Adrenal gland (tissue), 19 donors: ENCODE measurements at regions of chr5 and their contacts with region 1.

Region 1: DNA sequence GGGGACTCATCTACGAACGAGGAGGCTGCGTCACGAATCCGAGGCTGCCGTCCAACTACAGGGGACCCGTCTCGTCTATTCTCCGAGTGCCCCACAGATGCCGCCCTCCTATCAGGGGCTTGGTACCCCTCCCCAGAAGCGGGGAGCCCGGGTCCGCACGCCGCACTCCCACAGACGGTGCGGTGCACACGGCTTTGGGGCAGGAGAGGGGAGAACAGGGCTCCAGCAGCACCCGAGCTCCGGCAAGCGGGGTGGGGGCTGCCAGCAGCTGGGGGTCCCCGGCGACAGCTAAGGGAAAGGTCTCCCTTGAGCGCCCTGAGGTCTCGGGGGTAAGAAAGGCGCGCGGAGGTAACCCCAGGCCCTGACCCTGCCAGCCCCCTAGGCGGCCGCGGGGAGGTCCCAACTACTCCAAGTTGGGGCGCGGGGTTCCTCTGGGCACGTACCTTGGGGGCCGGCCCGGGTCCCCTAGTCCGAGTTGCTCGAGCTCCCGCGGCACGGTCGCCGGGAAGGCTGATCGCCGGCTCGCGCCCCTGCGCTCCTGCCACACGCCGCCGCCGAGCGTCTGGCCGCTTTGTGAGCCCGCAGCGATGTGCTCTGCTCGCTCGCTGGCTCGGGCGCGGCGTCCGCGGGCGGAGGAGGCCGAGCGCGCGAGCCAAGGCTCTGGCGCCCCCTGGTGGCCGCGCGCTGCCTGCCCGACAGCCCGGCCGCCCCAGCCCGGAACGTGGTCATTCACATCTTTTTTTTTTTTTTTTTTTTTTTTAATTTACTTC is at the start of gene SPOCK1:
- DNase-seq: peak; percentile 56 to 86 (median 74)
- H3K4me3 ChIP-seq: peak within 1 kb of the TSS in 2 of 4 donors; percentile 43 to 65
- H3K27ac ChIP-seq: peak within 1 kb of the TSS in 1 of 5 donors; percentile 43
- H3K4me1 ChIP-seq: peaks cover 5 to 6% of the 10 kb centered on the region in 2 donors
- H3K27me3 ChIP-seq: peaks cover 4% of the 10 kb centered on the region
- CTCF ChIP-seq: peak; percentile 10 to 97 (median 56)
- POLR2A ChIP-seq: peak in 1 of 2 donors; percentile 61
- total RNA-seq, gene SPOCK1: 5.4 to 102 (median 62.1) TPM

Region 2: DNA sequence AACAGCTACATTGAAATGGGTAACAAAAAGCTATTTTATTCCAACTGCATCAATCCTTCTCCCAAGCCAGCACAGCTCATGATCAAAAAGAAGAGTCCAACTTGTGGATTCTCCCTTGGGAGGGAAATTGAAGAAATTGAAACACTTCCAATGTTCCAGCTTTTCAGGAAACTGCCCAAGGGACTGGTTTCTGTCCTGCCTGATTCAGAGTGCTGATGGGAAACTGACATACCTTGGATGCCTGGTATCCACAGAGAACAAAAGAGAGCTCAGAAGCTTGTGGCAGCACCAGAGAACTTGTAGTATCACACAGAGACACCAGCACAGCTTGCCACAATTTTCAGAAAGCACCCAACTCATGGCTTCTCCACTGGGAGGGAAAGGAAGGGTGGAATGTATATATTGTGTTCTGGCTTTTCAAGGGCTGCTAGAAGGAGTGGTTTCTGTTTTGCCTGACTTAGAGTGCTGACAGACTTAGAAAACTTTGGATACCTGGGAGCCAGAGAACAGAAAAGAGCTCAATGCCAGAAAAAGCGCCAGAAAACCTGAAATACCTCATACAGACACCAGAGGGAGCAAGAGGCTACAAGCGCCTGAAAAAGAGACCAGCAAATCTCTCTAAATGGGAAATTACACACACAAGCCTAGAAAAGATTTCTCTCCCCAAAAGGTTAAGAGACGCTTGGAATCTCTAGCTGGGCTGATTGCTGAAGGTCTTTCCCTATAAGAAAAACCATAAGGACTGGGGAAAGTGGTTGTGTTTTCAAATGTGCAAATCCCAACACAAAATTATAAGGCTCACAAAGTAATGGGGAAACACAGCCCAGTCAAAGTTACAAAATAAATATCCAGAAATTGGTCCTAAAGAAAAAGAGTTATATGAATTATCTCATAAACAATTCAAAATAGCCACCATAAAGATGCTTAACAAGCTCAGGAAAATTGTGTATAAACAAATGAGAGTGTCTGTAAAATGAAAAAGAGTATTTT is 178.6 kb before region 1 on chr5:
- intact Hi-C with region 1: loop called in 1 of 2 experiments (anchors 5 kb)
- DNase-seq: peak in 6 of 7 donors; percentile 31 to 81 (median 50)
- H3K4me3 ChIP-seq: no peak overlapping the region
- H3K27ac ChIP-seq: no peak overlapping the region
- H3K4me1 ChIP-seq: peaks cover 5 to 13% of the 10 kb centered on the region in 2 donors
- H3K27me3 ChIP-seq: no peaks in the 10 kb centered on the region
- CTCF ChIP-seq: peak; percentile 75 to 85 (median 80)
- POLR2A ChIP-seq: no peak

Region 3: DNA sequence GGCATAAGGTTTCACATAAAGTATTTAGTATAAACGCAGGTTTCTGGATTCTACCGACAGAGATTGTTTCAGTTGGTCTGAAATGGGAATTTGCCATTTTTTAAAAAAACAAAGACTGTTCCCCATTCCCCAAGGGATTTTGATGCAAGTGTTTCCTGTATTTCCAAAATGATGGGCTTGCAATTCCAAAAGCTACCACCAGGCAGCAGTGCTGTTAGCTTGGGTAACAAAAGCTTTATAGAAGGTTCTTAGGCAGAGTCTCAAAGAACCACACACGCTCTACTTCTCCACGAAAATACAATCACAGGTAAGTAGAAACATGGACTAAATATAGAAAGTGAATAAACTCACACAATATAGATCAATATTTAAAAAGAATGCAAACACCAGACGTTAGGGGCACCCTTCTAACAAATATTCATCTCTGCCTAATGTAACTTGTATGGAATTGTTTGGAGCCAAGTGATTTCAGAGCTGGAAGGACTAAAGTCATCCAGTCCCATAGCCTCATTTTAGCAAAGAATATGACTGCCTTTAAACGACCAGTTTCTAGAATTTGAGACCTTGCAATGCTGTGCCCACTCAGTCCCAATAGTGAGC is 154.1 kb before region 1 on chr5:
- intact Hi-C with region 1: loop called (anchors 5 kb)
- DNase-seq: peak; percentile 33 to 86 (median 59)
- H3K4me3 ChIP-seq: no peak overlapping the region
- H3K27ac ChIP-seq: no peak overlapping the region
- H3K4me1 ChIP-seq: no peaks in the 10 kb centered on the region
- H3K27me3 ChIP-seq: no peaks in the 10 kb centered on the region
- CTCF ChIP-seq: peak; percentile 74 to 84 (median 79)
- POLR2A ChIP-seq: no peak

Region 4: DNA sequence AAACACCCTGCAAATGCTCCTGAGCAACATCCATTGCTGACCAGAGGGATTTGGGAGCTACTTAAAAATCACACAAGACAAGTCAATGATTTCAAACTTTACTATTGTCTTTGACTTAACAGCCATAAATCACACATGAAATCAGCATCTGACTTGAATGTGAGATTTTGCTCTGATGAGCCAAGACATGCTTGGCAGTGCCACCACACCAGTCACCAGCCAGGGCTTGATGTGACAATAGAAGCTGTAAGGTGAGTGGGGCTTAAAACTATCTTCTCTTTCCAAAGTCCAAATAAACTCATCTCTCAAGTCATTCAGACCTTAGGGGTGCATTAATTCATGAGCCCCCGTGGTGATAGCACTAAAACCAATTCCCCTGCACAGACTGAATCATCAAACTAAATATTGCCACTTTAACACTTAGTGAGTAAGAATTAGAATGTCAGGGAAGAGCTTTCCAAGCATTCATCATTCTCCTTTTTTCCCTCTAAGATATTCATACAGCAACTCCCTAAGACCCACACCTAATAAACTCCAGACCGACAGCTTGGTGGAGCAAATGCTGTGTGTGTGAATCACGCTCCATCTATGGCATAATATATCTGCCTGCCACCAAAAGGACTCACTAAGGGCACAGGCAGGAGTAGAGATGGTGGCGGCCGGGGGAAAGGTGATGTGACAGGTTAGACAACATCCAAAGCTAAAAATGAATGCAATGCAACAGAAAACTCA is 119.2 kb before region 1 on chr5:
- intact Hi-C with region 1: no loop called
- DNase-seq: no peak
- H3K4me3 ChIP-seq: no peak overlapping the region
- H3K27ac ChIP-seq: no peak overlapping the region
- H3K4me1 ChIP-seq: no peaks in the 10 kb centered on the region
- H3K27me3 ChIP-seq: no peaks in the 10 kb centered on the region
- CTCF ChIP-seq: no peak
- POLR2A ChIP-seq: no peak